PC-9 (cell line): ENCODE measurements at regions of chr1 and their contacts with region 1.

Region 1: DNA sequence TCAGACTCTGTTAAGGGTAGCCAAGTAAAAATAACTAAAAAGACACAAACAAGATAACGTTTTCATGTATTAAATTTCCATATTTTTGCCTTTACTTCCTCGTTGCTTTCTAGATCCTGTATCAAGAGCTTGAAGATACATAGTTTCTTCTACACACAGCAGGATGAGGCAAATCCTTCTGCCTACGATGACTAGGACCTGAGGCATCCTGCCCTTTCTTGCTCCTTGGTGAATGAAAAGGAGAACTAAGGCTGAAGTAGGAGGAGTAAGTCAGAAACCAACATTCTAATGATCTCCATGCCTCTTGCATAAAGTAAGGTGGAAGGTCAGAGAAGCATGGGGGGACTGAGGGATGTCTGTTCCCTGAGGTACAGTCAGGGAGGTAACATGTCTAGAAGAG is 102.6 kb downstream of the GPATCH2 start:
- DNase-seq: no peak
- H3K4me3 ChIP-seq: no peak overlapping the region
- H3K27ac ChIP-seq: no peak overlapping the region
- H3K4me1 ChIP-seq: no peaks in the 10 kb centered on the region
- H3K27me3 ChIP-seq: no peaks in the 10 kb centered on the region
- CTCF ChIP-seq: no peak

Region 2: DNA sequence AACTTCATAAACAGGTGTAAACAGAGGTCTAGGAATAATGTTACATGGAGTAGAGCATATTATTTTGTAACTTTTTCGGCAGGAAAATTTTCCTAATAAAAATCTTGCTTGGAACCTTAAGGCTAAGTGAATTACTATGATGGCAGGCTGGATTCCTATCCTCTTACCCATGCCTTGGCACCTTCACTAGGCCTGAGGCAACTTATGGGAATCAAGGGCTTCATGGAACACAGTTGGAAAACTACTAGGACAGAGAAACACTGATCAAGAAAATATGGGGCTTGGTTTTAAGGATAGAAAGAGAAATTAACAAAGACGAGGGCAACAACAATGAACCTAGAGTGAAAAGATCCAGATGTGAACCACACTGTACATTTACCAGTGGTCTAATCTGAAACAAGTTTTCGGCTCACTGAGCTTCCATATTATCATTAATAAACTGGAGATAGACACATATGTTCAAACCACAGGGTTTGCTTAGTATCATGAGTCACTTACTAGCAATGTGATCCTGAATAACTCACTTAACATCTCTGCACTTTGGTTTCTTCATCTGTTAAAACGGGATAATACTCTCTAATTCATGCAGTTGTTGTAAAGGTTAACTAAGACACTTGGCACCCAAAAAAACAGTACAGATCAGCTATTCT is 34.1 kb after region 1 on chr1:
- CTCF ChIA-PET with region 1: no interaction called
- POLR2A ChIA-PET with region 1: no interaction called
- intact Hi-C with region 1: loop called (anchors 5 kb)
- DNase-seq: peak; percentile 20 to 80
- H3K4me3 ChIP-seq: no peak overlapping the region
- H3K27ac ChIP-seq: peak overlapping the region; percentile 20; the same call in 1 of the 2 replicates
- H3K4me1 ChIP-seq: peaks cover 24% of the 10 kb centered on the region
- H3K27me3 ChIP-seq: no peaks in the 10 kb centered on the region
- CTCF ChIP-seq: no peak